ENCODE measurements at regions of chr11 and their contacts with region 1.

Region 1: GRCh38 chr11:48063424-48063978 is 83.1 kb downstream of the PTPRJ start:
- DNase-seq: peak in 1 of 5 donors; percentile 33
- ATAC-seq: peak; percentile 32 to 77 (median 72)
- H3K4me3 ChIP-seq: no peak overlapping the region
- H3K27ac ChIP-seq: peak overlapping the region in 9 of 12 donors; percentile 7 to 82 (median 47)
- H3K4me1 ChIP-seq: peaks cover 0 to 87% (median 19%) of the 10 kb centered on the region in 12 donors
- H3K27me3 ChIP-seq: no peaks in the 10 kb centered on the region
- CTCF ChIP-seq: no peak
- POLR2A ChIP-seq: no peak

Region 2: DNA sequence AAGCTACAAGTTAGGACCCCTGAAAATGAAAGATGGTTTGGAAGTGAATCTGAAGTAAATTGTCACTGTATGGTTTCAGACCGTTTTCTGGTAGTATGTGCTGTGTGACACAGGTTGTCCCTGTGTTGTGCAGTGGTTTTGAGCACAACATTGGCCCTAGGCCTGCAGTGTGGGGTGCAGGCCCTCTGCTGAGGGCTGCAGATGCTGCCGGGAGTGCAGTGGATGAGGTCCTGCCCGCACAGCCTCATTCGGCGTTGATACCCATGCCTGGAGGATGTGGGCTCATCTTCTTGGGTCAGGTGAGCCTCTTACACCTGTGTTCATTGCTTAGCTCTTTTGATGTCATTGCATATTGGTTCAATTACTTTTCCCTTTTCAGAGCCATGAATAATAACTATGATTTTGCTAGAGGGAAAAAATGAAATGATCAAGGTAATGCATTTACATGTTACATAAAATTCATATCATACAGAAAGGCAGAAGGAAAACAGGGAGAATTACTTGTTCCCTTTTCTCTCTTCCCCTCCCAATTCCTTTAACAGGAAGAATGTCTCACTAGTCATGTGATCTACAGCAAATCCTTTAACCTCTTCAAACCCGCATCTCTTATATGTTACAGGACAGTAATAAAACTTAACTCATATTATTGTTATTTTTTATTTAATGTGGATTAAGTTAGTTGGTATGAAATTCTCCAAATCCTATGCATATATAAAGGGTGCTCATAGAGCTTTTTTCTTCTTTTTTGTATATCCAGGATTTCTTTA is 34.4 kb before region 1 on chr11:
- intact Hi-C with region 1: loop called in 1 of 10 experiments (anchors 5 kb)
- DNase-seq: no peak
- ATAC-seq: peak in 1 of 4 donors; percentile 41
- H3K4me3 ChIP-seq: peak overlapping the region in 1 of 12 donors; percentile 2
- H3K27ac ChIP-seq: peak overlapping the region in 2 of 12 donors; percentile 22 to 87
- H3K4me1 ChIP-seq: peaks cover 0 to 79% (median 3%) of the 10 kb centered on the region in 12 donors
- H3K27me3 ChIP-seq: no peaks in the 10 kb centered on the region
- CTCF ChIP-seq: no peak
- POLR2A ChIP-seq: no peak

Measured in heart left ventricle (tissue), 16 donors.